Calu3 (cell line): ENCODE measurements at regions of chr17 and their contacts with region 1.

Region 1: GRCh38 chr17:58006924-58007780 is at the start of gene SRSF1:
- DNase-seq: peak; percentile 92
- H3K4me3 Mint-ChIP-seq: peak within 1 kb of the TSS; percentile 96
- H3K27ac Mint-ChIP-seq: peak within 1 kb of the TSS; percentile 97
- H3K4me1 Mint-ChIP-seq: peaks cover 27% of the 10 kb centered on the region
- H3K27me3 Mint-ChIP-seq: peaks cover 1% of the 10 kb centered on the region
- CTCF ChIP-seq: no peak
- total RNA-seq, gene SRSF1: 232 and 239 TPM in 2 replicates

Region 2: GRCh38 chr17:57987580-57988421 is 19.4 kb before region 1 on chr17 and contains the start of gene VEZF1:
- CTCF ChIA-PET with region 1: no interaction called
- intact Hi-C with region 1: no loop called
- DNase-seq: peak; percentile 66
- H3K4me3 Mint-ChIP-seq: peak within 1 kb of the TSS; percentile 79
- H3K27ac Mint-ChIP-seq: peak within 1 kb of the TSS; percentile 93
- H3K4me1 Mint-ChIP-seq: peaks cover 15% of the 10 kb centered on the region
- H3K27me3 Mint-ChIP-seq: no peaks in the 10 kb centered on the region
- CTCF ChIP-seq: no peak
- total RNA-seq, gene VEZF1: 33.4 and 40.4 TPM in 2 replicates

Region 3: DNA sequence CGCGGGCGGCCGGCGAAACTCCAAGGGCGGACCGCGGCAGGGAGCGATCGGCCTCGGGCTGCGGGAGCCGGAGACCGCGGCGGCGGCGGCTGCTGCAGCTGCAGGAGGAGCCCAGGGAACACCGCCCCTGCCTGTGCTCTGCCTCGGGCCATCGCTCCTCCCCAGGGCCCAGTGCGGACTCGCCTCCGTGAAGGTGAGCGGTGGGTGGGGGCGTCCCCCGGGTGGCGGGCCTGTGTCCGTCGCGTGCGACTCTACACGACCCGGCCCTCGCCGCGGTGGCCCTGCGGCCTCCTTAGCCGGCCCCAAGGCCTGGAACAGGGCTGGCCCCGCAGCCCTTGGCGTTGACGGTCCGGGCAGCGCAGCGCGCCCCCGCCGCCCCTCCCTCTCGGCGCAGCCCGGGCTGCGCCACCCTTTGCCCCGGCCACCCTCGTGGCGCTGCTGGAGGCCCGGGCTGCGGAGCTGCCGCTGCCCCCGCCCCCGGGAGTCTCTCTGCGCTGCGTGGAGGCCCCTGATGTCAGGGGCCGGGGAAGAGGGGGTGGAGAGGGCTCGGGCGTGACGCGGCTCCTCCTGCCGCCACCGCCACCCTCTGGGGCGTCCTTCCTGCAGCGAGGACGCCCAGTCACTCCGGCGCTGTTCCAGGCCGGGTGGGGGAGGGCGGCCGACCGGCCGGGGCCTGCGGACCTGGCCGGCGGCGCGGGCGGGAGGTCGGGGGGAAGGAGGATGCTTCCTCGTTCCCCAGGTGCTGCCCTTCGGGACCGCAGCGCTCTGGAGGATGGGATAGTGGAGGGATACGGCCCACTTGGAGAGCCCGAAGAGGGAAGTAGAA is 76.6 kb after region 1 on chr17:
- CTCF ChIA-PET with region 1: no interaction called
- intact Hi-C with region 1: loop called (anchors 2 kb)
- DNase-seq: peak; percentile 37
- H3K4me3 Mint-ChIP-seq: peak overlapping the region; percentile 75
- H3K27ac Mint-ChIP-seq: no peak overlapping the region
- H3K4me1 Mint-ChIP-seq: peaks cover 8% of the 10 kb centered on the region
- H3K27me3 Mint-ChIP-seq: peaks cover 23% of the 10 kb centered on the region
- CTCF ChIP-seq: no peak

Region 4: GRCh38 chr17:58112970-58113631 is 105.9 kb after region 1 on chr17:
- CTCF ChIA-PET with region 1: no interaction called
- intact Hi-C with region 1: loop called (anchors 2 kb)
- DNase-seq: peak; percentile 74
- H3K4me3 Mint-ChIP-seq: no peak overlapping the region
- H3K27ac Mint-ChIP-seq: no peak overlapping the region
- H3K4me1 Mint-ChIP-seq: no peaks in the 10 kb centered on the region
- H3K27me3 Mint-ChIP-seq: peaks cover 51% of the 10 kb centered on the region
- CTCF ChIP-seq: peak; percentile 78